Common myeloid progenitor, CD34-positive (primary cell): ENCODE measurements at regions of chr2 and their contacts with region 1.

Region 1: DNA sequence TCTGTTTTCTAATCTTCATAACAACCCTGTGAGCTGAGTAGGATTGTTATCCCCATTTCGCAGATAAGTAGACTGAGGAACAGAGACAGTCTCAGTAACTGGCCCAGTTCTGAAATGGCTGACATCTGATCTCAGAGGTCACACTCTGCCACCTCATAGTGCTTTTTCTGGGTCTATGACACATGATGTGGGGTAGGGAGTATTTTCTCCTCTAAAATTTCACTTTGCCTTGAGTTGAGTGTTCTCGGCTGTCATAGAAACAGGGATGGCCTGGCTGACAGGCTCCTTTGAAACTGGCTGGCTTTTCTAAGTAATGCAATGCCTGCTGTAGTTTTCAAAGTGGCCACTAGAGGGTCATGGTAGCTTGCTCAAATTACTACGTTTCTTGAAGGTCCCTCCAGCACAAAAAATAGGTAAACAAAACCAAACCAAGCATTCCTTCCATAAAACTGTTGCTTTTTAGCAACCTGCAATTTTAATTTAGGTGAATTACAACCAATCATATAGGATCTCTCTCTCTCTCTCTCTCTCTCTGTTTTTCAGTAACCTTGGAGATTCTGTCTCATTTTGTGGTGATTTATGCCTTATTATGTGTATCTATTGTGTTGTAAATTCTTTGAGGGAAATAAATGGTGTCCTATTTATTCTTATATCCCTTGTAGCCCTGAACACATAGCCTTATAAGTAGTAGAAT is 84.2 kb upstream of the TTN start:
- DNase-seq: peak; percentile 52 to 85 (median 76)
- H3K4me3 ChIP-seq: no peak overlapping the region
- H3K27ac ChIP-seq: no peak overlapping the region
- H3K4me1 ChIP-seq: peaks cover 0 to 4% (median 0%) of the 10 kb centered on the region in 4 experiments
- H3K27me3 ChIP-seq: no peaks in the 10 kb centered on the region

Region 2: DNA sequence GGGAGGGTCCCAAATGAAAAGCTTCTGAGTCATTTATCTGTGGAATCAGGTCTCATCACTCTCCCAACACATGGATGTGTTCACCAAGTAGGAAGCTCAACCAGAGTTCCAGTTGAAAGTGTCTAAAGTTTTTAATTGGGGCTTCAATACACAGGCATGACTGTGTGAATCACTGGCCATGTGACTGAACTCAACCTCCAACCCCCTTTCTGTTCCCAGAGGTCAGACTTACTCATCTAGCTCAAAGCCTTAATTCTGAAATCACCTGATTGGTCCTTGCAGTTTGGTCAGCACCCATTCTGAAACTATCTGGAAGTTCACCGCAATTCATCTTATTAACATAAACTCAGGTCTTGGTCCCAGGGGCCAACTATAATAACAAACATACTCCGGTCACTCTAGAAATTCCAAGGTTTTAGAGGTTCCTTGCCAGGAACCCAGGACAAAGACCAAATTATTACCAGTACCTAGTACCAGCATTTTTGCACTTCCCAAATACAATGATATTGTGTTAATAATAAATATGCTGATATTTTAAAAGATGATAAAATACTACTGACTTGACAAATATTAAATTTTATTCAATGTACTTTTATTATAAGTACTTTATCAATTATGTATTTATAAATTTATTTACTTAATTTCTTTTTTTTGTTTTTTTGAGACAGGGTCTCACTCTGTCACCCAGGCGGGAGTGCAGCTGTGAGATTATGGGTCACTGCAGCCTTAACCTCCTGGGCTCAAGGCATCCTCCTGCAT is 789.9 kb before region 1 on chr2:
- CTCF ChIA-PET with region 1: no interaction called
- POLR2A ChIA-PET with region 1: no interaction called
- DNase-seq: no peak
- H3K4me3 ChIP-seq: no peak overlapping the region
- H3K27ac ChIP-seq: no peak overlapping the region
- H3K4me1 ChIP-seq: peaks cover 0 to 1% (median 0%) of the 10 kb centered on the region in 4 experiments
- H3K27me3 ChIP-seq: no peaks in the 10 kb centered on the region

Region 3: DNA sequence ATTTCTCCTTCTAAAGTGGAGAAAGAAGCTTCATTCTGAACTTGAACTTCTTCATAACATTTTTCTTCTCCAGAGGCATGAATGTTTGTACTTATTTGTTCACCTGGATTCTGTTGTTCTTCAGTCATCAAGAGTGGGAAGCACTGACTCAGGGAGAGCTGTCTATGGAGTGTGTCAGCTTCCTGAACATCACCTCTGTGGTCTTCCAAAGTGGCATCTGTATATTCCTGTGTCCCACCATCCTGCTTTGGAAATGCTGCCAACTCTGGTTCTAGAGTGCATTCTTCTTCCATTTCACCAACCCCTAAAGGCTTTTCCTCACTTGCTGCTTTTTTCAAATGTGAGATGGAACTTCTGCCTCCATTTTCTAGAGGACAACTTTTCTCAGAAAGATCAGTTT is 143.6 kb before region 1 on chr2:
- CTCF ChIA-PET with region 1: no interaction called
- POLR2A ChIA-PET with region 1: no interaction called
- DNase-seq: no peak
- H3K4me3 ChIP-seq: no peak overlapping the region
- H3K27ac ChIP-seq: no peak overlapping the region
- H3K4me1 ChIP-seq: no peaks in the 10 kb centered on the region
- H3K27me3 ChIP-seq: no peaks in the 10 kb centered on the region

Region 4: DNA sequence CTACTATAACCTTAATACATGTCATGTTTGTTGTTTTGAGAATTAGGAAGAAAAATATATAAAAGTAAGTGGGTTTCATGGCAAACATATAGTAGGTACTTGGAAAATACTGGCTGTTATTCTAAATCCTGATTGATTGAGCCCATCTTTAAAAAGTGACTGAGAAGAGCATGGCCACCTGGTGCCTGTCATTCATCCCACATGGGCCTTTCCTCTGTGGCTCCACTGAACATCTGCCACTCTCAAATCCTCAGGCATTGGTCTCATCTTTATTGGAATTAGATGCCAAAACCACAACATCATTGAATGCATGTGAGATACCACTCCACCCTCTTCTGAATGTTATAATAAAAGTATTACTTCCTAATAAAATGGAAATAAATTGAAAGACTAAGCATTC is 17.4 kb after region 1 on chr2:
- CTCF ChIA-PET with region 1: interaction called, 18 read pairs
- POLR2A ChIA-PET with region 1: no interaction called
- DNase-seq: no peak
- H3K4me3 ChIP-seq: no peak overlapping the region
- H3K27ac ChIP-seq: no peak overlapping the region
- H3K4me1 ChIP-seq: no peaks in the 10 kb centered on the region
- H3K27me3 ChIP-seq: no peaks in the 10 kb centered on the region